Activated CD4-positive, alpha-beta T cell treated with anti-CD3 and anti-CD28 coated beads, Interleukin-2, amount 10 ng/mL, durations not matched to agents 7 days and 5 days (primary cell): ENCODE measurements at regions of chr12 and their contacts with region 1.

Region 1: GRCh38 chr12:452667-453210 is 7.0 kb upstream of the B4GALNT3 start:
- DNase-seq: peak; percentile 26
- H3K4me3 Mint-ChIP-seq: no peak overlapping the region
- H3K27ac Mint-ChIP-seq: no peak overlapping the region
- H3K4me1 Mint-ChIP-seq: peaks cover 3% of the 10 kb centered on the region
- H3K27me3 Mint-ChIP-seq: peaks cover 40% of the 10 kb centered on the region

Region 2: GRCh38 chr12:442235-442884 is 10.4 kb before region 1 on chr12:
- CTCF ChIA-PET with region 1: interaction called, 36 read pairs
- POLR2A ChIA-PET with region 1: no interaction called
- DNase-seq: peak; percentile 55
- H3K4me3 Mint-ChIP-seq: no peak overlapping the region
- H3K27ac Mint-ChIP-seq: no peak overlapping the region
- H3K4me1 Mint-ChIP-seq: no peaks in the 10 kb centered on the region
- H3K27me3 Mint-ChIP-seq: no peaks in the 10 kb centered on the region

Region 3: GRCh38 chr12:495466-495865 is 42.7 kb after region 1 on chr12:
- CTCF ChIA-PET with region 1: interaction called, 15 read pairs
- POLR2A ChIA-PET with region 1: no interaction called
- DNase-seq: no peak
- H3K4me3 Mint-ChIP-seq: no peak overlapping the region
- H3K27ac Mint-ChIP-seq: no peak overlapping the region
- H3K4me1 Mint-ChIP-seq: peaks cover 15% of the 10 kb centered on the region
- H3K27me3 Mint-ChIP-seq: peaks cover 11% of the 10 kb centered on the region

Region 4: GRCh38 chr12:538731-539539 is 86.2 kb after region 1 on chr12:
- CTCF ChIA-PET with region 1: interaction called, 137 read pairs
- POLR2A ChIA-PET with region 1: no interaction called
- DNase-seq: peak; percentile 80
- H3K4me3 Mint-ChIP-seq: peak overlapping the region; percentile 9
- H3K27ac Mint-ChIP-seq: peak overlapping the region; percentile 83
- H3K4me1 Mint-ChIP-seq: peaks cover 22% of the 10 kb centered on the region
- H3K27me3 Mint-ChIP-seq: peaks cover 3% of the 10 kb centered on the region

Region 5: GRCh38 chr12:553205-554000 is 100.7 kb after region 1 on chr12:
- CTCF ChIA-PET with region 1: interaction called, 73 read pairs
- POLR2A ChIA-PET with region 1: no interaction called
- DNase-seq: peak; percentile 66
- H3K4me3 Mint-ChIP-seq: peak overlapping the region; percentile 84
- H3K27ac Mint-ChIP-seq: peak overlapping the region; percentile 89
- H3K4me1 Mint-ChIP-seq: peaks cover 64% of the 10 kb centered on the region
- H3K27me3 Mint-ChIP-seq: peaks cover under 1% of the 10 kb centered on the region